GM12878 (cell line): ENCODE measurements at regions of chr2 and their contacts with region 1.

Region 1: GRCh38 chr2:95314964-95315611 is 17.9 kb downstream of the KCNIP3 start:
- DNase-seq: no peak
- ATAC-seq: peak; percentile 77
- H3K4me3 ChIP-seq: no peak overlapping the region
- H3K27ac ChIP-seq: no peak overlapping the region
- H3K4me1 ChIP-seq: no peaks in the 10 kb centered on the region
- H3K27me3 ChIP-seq: no peaks in the 10 kb centered on the region; a peak in 1 of 4 replicates
- CTCF ChIP-seq: peak; percentile 28 to 48 (median 44); a peak in 4 of 6 replicates
- EP300 ChIP-seq: no peak
- POLR2A ChIP-seq: no peak
- RAD21 ChIP-seq: peak; percentile 26; the same call in 1 of the 2 replicates

Region 2: GRCh38 chr2:95159690-95160449 is 155.2 kb before region 1 on chr2 and contains the start of gene ZNF514:
- CTCF ChIA-PET with region 1: no interaction called
- POLR2A ChIA-PET with region 1: no interaction called
- RAD21 ChIA-PET with region 1: no interaction called
- SMC1A ChIA-PET with region 1: no interaction called
- in situ Hi-C with region 1: no loop called
- intact Hi-C with region 1: no loop called
- DNase-seq: no peak
- ATAC-seq: peak; percentile 96
- H3K4me3 ChIP-seq: peak within 1 kb of the TSS; percentile 78
- H3K27ac ChIP-seq: no peak within 1 kb of the TSS
- H3K4me1 ChIP-seq: peaks cover 3% of the 10 kb centered on the region; the same call in 1 of the 2 replicates
- H3K27me3 ChIP-seq: no peaks in the 10 kb centered on the region
- CTCF ChIP-seq: no peak
- EP300 ChIP-seq: no peak
- POLR2A ChIP-seq: peak; percentile 34
- RAD21 ChIP-seq: no peak
- polyA plus RNA-seq, gene ZNF514: 5.8 to 7.2 TPM

Region 3: DNA sequence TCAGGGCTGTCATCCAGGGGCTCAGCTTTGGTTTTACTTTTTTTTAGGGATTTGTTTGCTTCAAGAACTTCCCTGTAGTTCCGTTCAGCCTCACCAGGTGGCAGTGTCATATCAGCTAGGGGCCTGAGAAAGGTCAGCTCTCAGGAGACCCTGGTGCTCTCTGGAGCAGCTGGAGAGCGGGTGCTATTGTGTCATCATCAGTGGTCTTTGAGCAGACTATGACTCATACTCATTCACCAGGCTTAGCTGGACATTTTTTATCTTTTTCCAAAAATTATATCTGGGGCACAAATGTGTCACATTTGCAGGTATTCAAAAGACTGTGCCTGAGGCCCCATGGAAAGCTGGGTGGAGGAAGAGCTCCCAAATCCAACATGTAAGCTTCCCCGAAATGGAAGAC is 83.4 kb before region 1 on chr2:
- CTCF ChIA-PET with region 1: interaction called, 17 read pairs
- POLR2A ChIA-PET with region 1: no interaction called
- RAD21 ChIA-PET with region 1: interaction called, 7 read pairs
- SMC1A ChIA-PET with region 1: no interaction called
- in situ Hi-C with region 1: no loop called
- intact Hi-C with region 1: loop called (anchors 1 kb)
- DNase-seq: no peak
- ATAC-seq: peak; percentile 58; the same call in 2 of the 3 replicates
- H3K4me3 ChIP-seq: no peak overlapping the region
- H3K27ac ChIP-seq: no peak overlapping the region
- H3K4me1 ChIP-seq: no peaks in the 10 kb centered on the region
- H3K27me3 ChIP-seq: no peaks in the 10 kb centered on the region
- CTCF ChIP-seq: peak; percentile 61 to 74 (median 67)
- EP300 ChIP-seq: no peak
- POLR2A ChIP-seq: no peak
- RAD21 ChIP-seq: peak; percentile 72